Panc1 (cell line): ENCODE measurements at regions of chr3 and their contacts with region 1.

Region 1: GRCh38 chr3:150035301-150035779 is 64.6 kb upstream of the PFN2 start:
- DNase-seq: no peak
- ATAC-seq: no peak
- H3K4me3 ChIP-seq: no peak overlapping the region
- H3K27ac ChIP-seq: no peak overlapping the region
- H3K4me1 ChIP-seq: no peaks in the 10 kb centered on the region
- H3K27me3 ChIP-seq: no peaks in the 10 kb centered on the region; the same call in 1 of the 2 replicates
- CTCF ChIP-seq: no peak

Region 2: GRCh38 chr3:149026718-149027117 is 1008.6 kb before region 1 on chr3:
- CTCF ChIA-PET with region 1: no interaction called
- POLR2A ChIA-PET with region 1: no interaction called
- in situ Hi-C with region 1: no loop called
- intact Hi-C with region 1: no loop called
- DNase-seq: no peak
- ATAC-seq: no peak
- H3K4me3 ChIP-seq: no peak overlapping the region
- H3K27ac ChIP-seq: no peak overlapping the region
- H3K4me1 ChIP-seq: no peaks in the 10 kb centered on the region
- H3K27me3 ChIP-seq: no peaks in the 10 kb centered on the region
- CTCF ChIP-seq: no peak

Region 3: GRCh38 chr3:149990423-149990948 is 44.9 kb before region 1 on chr3:
- CTCF ChIA-PET with region 1: no interaction called
- POLR2A ChIA-PET with region 1: no interaction called
- in situ Hi-C with region 1: no loop called
- intact Hi-C with region 1: no loop called
- DNase-seq: no peak
- ATAC-seq: no peak
- H3K4me3 ChIP-seq: no peak overlapping the region
- H3K27ac ChIP-seq: no peak overlapping the region
- H3K4me1 ChIP-seq: no peaks in the 10 kb centered on the region
- H3K27me3 ChIP-seq: no peaks in the 10 kb centered on the region
- CTCF ChIP-seq: no peak

Region 4: DNA sequence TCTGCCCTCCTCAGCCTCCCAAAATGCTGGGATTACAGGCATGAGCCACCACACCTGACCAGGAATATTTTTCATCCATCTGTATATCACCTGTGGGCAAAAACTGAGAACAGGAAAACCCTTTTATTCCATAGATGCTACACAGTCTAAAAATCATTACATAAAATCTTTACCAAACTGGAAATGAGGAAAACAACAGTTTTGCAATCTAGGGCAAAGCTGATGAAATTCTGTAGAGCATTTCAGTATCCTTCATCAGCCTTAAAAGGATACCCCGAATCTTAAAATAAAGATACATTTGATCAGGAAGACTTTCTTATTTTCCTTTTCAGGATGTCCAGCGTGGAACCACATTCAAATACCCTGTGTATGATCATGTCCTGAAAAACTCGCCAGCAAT is 720.5 kb after region 1 on chr3:
- CTCF ChIA-PET with region 1: no interaction called
- POLR2A ChIA-PET with region 1: interaction called, 10 read pairs
- in situ Hi-C with region 1: no loop called
- intact Hi-C with region 1: no loop called
- DNase-seq: no peak
- ATAC-seq: no peak
- H3K4me3 ChIP-seq: no peak overlapping the region
- H3K27ac ChIP-seq: no peak overlapping the region; the same call in 1 of the 2 replicates
- H3K4me1 ChIP-seq: peaks cover 14% of the 10 kb centered on the region
- H3K27me3 ChIP-seq: no peaks in the 10 kb centered on the region
- CTCF ChIP-seq: no peak